ENCODE measurements at regions of chr5 and their contacts with region 1.

Region 1: DNA sequence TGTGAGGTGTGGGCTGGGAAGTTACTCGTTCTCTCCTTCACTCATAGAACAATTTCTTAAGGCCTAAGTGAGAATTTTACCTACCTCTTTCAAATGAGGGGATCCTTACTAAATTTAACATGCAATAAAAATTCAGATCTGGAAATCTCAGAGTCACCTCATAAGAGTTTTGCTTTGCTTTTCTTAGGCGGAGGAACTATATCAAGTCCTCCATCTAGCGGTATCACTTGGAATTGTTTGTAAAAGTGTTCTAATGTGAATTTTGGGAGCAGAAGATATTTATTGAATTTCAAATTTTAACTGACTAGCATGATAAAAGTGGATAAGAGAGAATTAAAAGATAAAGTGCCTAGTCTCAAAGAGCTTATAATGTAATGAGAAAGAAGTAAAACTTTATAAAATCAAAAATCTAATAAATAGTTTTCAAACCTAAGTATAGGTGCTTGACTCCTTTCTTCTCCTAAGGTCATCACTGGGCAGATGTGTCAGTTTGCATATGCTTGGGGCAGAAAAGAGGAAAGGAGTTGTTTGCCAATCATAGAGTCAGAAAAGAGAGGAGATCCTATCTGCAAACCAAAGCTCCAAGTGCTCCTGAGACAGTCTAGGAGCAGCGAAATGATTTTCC is 145.7 kb upstream of the DAB2 start:
- DNase-seq: no peak
- H3K4me3 ChIP-seq: no peak overlapping the region
- H3K27ac ChIP-seq: no peak overlapping the region
- H3K4me1 ChIP-seq: no peaks in the 10 kb centered on the region
- H3K27me3 ChIP-seq: no peaks in the 10 kb centered on the region
- CTCF ChIP-seq: peak in 2 of 3 experiments; percentile 41 to 49; a peak in 2 of 4 replicates
- EP300 ChIP-seq: no peak
- POLR2A ChIP-seq: no peak
- RAD21 ChIP-seq: peak; percentile 61 to 73

Region 2: GRCh38 chr5:39394946-39395345 is 175.6 kb before region 1 on chr5:
- CTCF ChIA-PET with region 1: interaction called, 11 read pairs
- POLR2A ChIA-PET with region 1: no interaction called
- DNase-seq: no peak
- H3K4me3 ChIP-seq: no peak overlapping the region
- H3K27ac ChIP-seq: no peak overlapping the region
- H3K4me1 ChIP-seq: peaks cover 0 to 3% (median 0%) of the 10 kb centered on the region in 4 experiments; a peak in 2 of 7 replicates
- H3K27me3 ChIP-seq: no peaks in the 10 kb centered on the region
- CTCF ChIP-seq: no peak
- EP300 ChIP-seq: no peak
- POLR2A ChIP-seq: no peak
- RAD21 ChIP-seq: no peak